Astrocyte of the cerebellum (primary cell): ENCODE measurements at regions of chr20 and their contacts with region 1.

Region 1: GRCh38 chr20:43205699-43206098 is 16.0 kb upstream of the PTPRT start:
- DNase-seq: no peak
- H3K4me3 ChIP-seq: no peak overlapping the region
- CTCF ChIP-seq: no peak

Region 2: DNA sequence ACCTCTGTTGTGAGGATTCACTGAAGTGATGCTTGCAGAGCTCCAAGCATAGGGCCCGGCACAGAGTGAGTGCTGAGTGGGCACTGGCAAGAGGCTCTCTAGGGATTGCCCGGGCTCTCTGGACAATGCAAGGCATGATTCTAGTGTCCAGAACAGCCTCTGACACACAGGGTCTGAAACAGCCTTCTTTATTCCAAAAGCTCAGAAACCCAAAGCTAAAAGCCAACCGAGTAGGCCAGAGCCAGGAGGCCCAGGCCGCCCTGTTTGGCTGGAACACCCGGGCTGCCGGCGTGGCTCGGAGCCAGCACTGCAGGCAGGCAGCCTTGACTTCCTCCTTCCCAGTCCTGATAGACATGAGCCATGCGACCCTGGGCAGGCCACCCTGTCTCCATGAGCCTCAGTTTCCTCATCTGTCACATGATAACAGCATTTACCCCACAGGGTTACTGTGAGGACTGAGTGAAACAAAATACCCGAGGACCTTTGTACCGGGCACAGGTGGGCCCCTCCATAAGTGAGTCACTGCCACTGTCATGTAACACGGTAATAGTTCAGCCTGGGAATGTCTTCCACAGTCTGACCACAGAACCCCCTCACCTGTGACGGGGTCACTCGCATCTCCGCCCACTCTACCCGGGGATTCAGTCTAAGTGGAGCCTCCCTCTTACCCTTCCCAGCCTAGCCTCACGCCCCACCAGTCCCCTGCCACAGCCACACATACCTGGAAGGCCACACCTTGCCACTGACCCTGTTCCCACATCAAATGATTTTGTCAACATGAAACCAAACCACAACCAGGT is 67.4 kb before region 1 on chr20:
- in situ Hi-C with region 1: loop called (anchors 5 kb)
- DNase-seq: no peak
- H3K4me3 ChIP-seq: no peak overlapping the region
- CTCF ChIP-seq: no peak

Region 3: GRCh38 chr20:43363506-43363905 is 157.8 kb after region 1 on chr20:
- in situ Hi-C with region 1: loop called (anchors 10 kb)
- DNase-seq: no peak
- H3K4me3 ChIP-seq: no peak overlapping the region
- CTCF ChIP-seq: no peak